Activated CD4-positive, alpha-beta T cell treated with anti-CD3 and anti-CD28 coated beads for 36 hours (primary cell): ENCODE measurements at regions of chr3 and their contacts with region 1.

Region 1: GRCh38 chr3:196179380-196180308 is 31.6 kb downstream of the ZDHHC19 start:
- DNase-seq: peak; percentile 91
- ATAC-seq: peak; percentile 85
- H3K4me3 Mint-ChIP-seq: peak overlapping the region; percentile 37
- H3K27ac Mint-ChIP-seq: peak overlapping the region; percentile 95
- H3K4me1 Mint-ChIP-seq: peaks cover 54% of the 10 kb centered on the region
- H3K27me3 Mint-ChIP-seq: no peaks in the 10 kb centered on the region

Region 2: DNA sequence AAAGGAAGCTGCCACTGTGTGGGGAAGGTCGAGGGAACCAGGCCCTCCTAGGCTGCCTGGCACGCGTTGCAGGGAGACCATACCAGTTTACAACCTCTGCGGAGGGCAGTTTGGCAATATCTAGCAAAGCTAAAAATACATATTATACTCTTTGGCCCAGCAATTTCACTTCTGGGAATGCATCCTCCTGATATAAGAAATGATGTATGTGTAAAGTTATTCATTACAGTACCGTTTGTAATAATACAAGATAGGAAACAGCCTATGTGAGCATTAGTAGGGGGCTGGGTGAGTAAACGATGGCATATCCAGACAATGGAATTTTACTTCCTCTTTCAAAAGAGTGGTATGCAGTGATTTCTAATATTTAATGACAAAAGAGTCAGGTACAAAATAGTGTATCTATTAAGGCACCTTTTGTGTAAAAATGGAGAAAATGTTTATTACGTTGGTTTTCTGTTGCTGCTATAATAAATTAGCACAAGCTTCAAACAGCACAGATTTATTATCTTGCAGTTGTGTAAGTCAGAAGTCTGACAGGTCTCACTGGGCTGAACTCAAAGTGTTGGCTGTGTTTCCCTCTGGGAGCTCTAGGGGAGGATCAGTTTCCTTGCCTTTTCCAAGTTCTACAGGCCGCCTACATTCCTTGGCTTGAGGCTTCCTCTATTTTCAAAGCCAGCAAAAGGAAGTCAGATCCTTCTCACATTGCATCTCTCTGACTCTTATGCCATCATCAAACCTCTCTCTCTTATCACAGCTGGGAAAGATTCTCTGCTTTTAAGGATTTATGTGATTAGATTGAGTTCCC is 604.9 kb before region 1 on chr3:
- CTCF ChIA-PET with region 1: no interaction called
- POLR2A ChIA-PET with region 1: no interaction called
- intact Hi-C with region 1: no loop called
- DNase-seq: no peak
- ATAC-seq: no peak
- H3K4me3 Mint-ChIP-seq: no peak overlapping the region
- H3K27ac Mint-ChIP-seq: no peak overlapping the region
- H3K4me1 Mint-ChIP-seq: peaks cover 7% of the 10 kb centered on the region
- H3K27me3 Mint-ChIP-seq: no peaks in the 10 kb centered on the region

Region 3: GRCh38 chr3:196073188-196073838 is 106.3 kb before region 1 on chr3:
- CTCF ChIA-PET with region 1: interaction called, 16 read pairs
- POLR2A ChIA-PET with region 1: interaction called, 4 read pairs
- intact Hi-C with region 1: no loop called
- DNase-seq: peak; percentile 78
- ATAC-seq: peak; percentile 96
- H3K4me3 Mint-ChIP-seq: no peak overlapping the region
- H3K27ac Mint-ChIP-seq: peak overlapping the region; percentile 72
- H3K4me1 Mint-ChIP-seq: peaks cover 29% of the 10 kb centered on the region
- H3K27me3 Mint-ChIP-seq: no peaks in the 10 kb centered on the region

Region 4: GRCh38 chr3:196111939-196112386 is 67.7 kb before region 1 on chr3:
- CTCF ChIA-PET with region 1: interaction called, 4 read pairs
- POLR2A ChIA-PET with region 1: no interaction called
- intact Hi-C with region 1: loop called (anchors 1 to 5 kb)
- DNase-seq: peak; percentile 52
- ATAC-seq: peak; percentile 91
- H3K4me3 Mint-ChIP-seq: peak overlapping the region; percentile 50
- H3K27ac Mint-ChIP-seq: peak overlapping the region; percentile 85
- H3K4me1 Mint-ChIP-seq: peaks cover 20% of the 10 kb centered on the region
- H3K27me3 Mint-ChIP-seq: no peaks in the 10 kb centered on the region

Region 5: GRCh38 chr3:196192036-196192523 is 12.4 kb after region 1 on chr3:
- CTCF ChIA-PET with region 1: interaction called, 5 read pairs
- POLR2A ChIA-PET with region 1: interaction called, 6 read pairs
- intact Hi-C with region 1: loop called in 1 of 2 experiments (anchors 1 kb)
- DNase-seq: peak; percentile 70
- ATAC-seq: peak; percentile 62
- H3K4me3 Mint-ChIP-seq: peak overlapping the region; percentile 40
- H3K27ac Mint-ChIP-seq: peak overlapping the region; percentile 95
- H3K4me1 Mint-ChIP-seq: peaks cover 31% of the 10 kb centered on the region
- H3K27me3 Mint-ChIP-seq: no peaks in the 10 kb centered on the region

Region 6: GRCh38 chr3:196219194-196219978 is 39.7 kb after region 1 on chr3:
- CTCF ChIA-PET with region 1: no interaction called
- POLR2A ChIA-PET with region 1: no interaction called
- intact Hi-C with region 1: loop called in 1 of 2 experiments (anchors 1 kb)
- DNase-seq: peak; percentile 81
- ATAC-seq: peak; percentile 95
- H3K4me3 Mint-ChIP-seq: peak overlapping the region; percentile 69
- H3K27ac Mint-ChIP-seq: peak overlapping the region; percentile 80
- H3K4me1 Mint-ChIP-seq: peaks cover 12% of the 10 kb centered on the region
- H3K27me3 Mint-ChIP-seq: peaks cover 3% of the 10 kb centered on the region